ENCODE measurements at regions of chr1 and their contacts with region 1.

Region 1: GRCh38 chr1:197868751-197869489 is 33.5 kb upstream of the C1orf53 start:
- DNase-seq: peak; percentile 45
- H3K4me3 Mint-ChIP-seq: no peak overlapping the region
- H3K27ac Mint-ChIP-seq: no peak overlapping the region
- H3K4me1 Mint-ChIP-seq: no peaks in the 10 kb centered on the region
- H3K27me3 Mint-ChIP-seq: no peaks in the 10 kb centered on the region

Region 2: GRCh38 chr1:197521118-197521739 is 347.7 kb before region 1 on chr1:
- CTCF ChIA-PET with region 1: interaction called, 58 read pairs
- POLR2A ChIA-PET with region 1: interaction called, 3 read pairs
- DNase-seq: no peak
- H3K4me3 Mint-ChIP-seq: no peak overlapping the region
- H3K27ac Mint-ChIP-seq: no peak overlapping the region
- H3K4me1 Mint-ChIP-seq: peaks cover 6% of the 10 kb centered on the region
- H3K27me3 Mint-ChIP-seq: no peaks in the 10 kb centered on the region

Region 3: GRCh38 chr1:197614916-197615692 is 253.8 kb before region 1 on chr1:
- CTCF ChIA-PET with region 1: interaction called, 81 read pairs
- POLR2A ChIA-PET with region 1: no interaction called
- DNase-seq: peak; percentile 32
- H3K4me3 Mint-ChIP-seq: no peak overlapping the region
- H3K27ac Mint-ChIP-seq: no peak overlapping the region
- H3K4me1 Mint-ChIP-seq: no peaks in the 10 kb centered on the region
- H3K27me3 Mint-ChIP-seq: no peaks in the 10 kb centered on the region

Region 4: GRCh38 chr1:197902454-197903195 is 33.7 kb after region 1 on chr1 and contains the start of gene C1orf53:
- CTCF ChIA-PET with region 1: interaction called, 12 read pairs
- POLR2A ChIA-PET with region 1: interaction called, 4 read pairs
- DNase-seq: peak; percentile 80
- H3K4me3 Mint-ChIP-seq: peak within 1 kb of the TSS; percentile 85
- H3K27ac Mint-ChIP-seq: peak within 1 kb of the TSS; percentile 74
- H3K4me1 Mint-ChIP-seq: peaks cover 17% of the 10 kb centered on the region
- H3K27me3 Mint-ChIP-seq: peaks cover 45% of the 10 kb centered on the region
- total RNA-seq, gene C1orf53: 0.55 TPM in 1 of 2 experiments, not detected in the other